ENCODE measurements at regions of chr17 and their contacts with region 1.

Region 1: DNA sequence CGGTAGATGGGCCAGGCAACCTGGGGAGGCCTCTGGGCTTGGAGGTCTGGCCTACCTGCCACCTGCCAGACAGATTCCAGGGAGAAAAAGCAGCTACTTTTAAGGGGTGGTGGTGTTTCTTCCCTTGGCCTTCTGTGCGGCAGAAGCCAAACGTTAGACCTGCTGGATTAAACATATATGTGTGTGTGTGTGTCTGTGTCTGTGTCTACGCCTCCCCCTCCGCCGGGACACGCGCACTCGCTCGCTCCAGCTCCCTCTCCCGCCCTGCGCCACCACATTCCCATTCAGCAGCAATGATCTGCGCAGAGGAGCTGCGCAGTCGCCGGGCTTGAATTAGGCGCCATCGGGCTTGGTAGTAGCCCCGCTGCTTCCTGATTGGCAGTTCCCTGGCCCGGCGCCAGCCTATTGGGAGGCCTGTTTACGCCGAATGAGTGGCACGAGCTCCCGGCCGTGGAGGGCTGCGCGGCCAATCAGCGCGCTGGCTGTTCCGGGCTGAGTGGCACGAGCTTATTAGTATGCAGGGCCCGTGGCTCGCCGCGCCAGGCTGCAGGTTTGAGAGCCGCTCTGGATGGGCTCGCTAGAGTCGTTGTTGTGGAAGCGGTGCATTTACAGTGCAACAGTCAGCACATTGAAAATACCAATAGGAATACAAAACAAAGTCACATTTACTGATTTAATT is at the start of gene BAHCC1:
- DNase-seq: peak; percentile 99 to 100 (median 100)

Region 2: GRCh38 chr17:81346090-81346907 is 48.8 kb before region 1 on chr17:
- intact Hi-C with region 1: loop called (anchors 2 kb)
- DNase-seq: peak; percentile 95 to 100 (median 99)

Region 3: GRCh38 chr17:81491181-81491581 is 96.1 kb after region 1 on chr17:
- intact Hi-C with region 1: no loop called
- DNase-seq: no peak

Measured in head of caudate nucleus (tissue), 42 donors.